AG04449 (cell line): ENCODE measurements at regions of chr1 and their contacts with region 1.

Region 1: GRCh38 chr1:32247983-32248889 is 1.2 kb downstream of the FAM167B start:
- DNase-seq: no peak
- H3K4me3 ChIP-seq: no peak overlapping the region
- CTCF ChIP-seq: peak; percentile 92

Region 2: GRCh38 chr1:32234792-32235191 is 13.4 kb before region 1 on chr1:
- CTCF ChIA-PET with region 1: interaction called, 47 read pairs
- POLR2A ChIA-PET with region 1: interaction called, 6 read pairs
- DNase-seq: no peak
- H3K4me3 ChIP-seq: no peak overlapping the region
- CTCF ChIP-seq: no peak

Region 3: DNA sequence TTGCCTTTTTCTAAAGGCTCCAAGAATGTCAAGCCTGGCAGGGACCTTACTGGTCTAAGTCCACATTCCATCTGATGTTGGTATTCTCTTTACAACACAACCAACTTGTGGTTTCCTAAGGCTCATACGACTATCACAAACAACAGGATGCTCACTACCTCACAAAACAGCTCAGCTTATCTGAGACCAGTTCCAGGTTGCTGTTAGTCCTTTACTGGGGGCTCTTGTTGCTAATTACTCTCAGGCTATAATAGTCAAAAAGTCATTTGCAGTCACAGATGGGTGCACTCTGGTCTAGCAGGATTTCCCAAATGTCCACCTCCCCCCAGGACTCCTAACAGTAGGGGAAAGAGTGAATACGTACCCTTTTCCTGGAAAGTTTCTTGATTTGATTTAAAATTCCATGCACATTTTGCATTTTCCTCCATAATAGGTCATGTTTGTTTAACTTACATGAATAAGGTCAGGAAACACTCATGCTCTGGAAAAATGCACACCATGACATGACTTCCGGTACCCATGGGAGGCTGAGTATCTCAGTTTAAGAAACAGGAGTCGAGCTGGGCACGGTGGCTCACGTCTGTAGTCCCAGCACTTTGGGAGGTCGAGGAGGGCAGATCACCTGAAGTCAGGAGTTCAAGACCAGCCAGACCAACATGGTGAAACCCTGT is 18.8 kb after region 1 on chr1:
- CTCF ChIA-PET with region 1: interaction called, 39 read pairs
- POLR2A ChIA-PET with region 1: no interaction called
- DNase-seq: peak; percentile 55
- H3K4me3 ChIP-seq: no peak overlapping the region
- CTCF ChIP-seq: no peak

Region 4: GRCh38 chr1:32390904-32391870 is 143.0 kb after region 1 on chr1:
- CTCF ChIA-PET with region 1: no interaction called
- POLR2A ChIA-PET with region 1: no interaction called
- DNase-seq: no peak
- H3K4me3 ChIP-seq: no peak overlapping the region
- CTCF ChIP-seq: no peak